Upper lobe of right lung (tissue), 1 donor: ENCODE measurements at regions of chr10 and their contacts with region 1.

Region 1: DNA sequence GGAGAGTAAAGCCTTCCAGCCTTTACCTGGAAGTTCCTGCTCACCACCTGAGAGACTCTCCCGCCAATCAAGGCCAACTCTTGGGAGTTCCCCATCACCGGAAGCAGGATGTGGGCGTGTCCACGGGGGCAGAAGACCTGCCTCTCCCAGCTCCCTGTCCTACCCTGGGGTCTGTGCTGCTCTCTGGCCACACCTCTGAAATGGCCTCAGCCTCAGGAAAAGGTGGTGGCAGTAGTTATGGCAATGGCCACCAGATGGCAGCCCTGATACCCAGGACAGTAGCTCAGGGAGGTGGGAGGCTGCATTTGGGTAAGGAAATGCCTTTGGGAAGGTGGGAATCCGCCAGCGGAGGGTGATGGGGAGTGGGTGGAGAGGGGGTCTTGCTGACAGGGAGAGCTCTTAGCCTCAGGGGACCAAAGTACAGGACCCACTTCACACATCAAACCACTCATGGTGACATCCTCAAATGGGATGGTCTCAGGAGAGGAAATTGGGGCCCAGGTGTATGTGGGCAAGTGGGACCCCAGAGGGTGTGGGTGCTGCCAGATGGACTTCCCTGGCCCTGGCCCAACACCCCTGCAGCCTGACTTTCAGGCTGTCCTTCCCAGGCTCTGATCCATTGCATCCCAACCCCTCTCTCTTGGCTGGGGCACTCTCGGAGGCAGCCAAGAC is 33.9 kb downstream of the KAZALD1 start:
- DNase-seq: peak; percentile 80
- ATAC-seq: peak; percentile 86
- H3K4me3 ChIP-seq: no peak overlapping the region
- H3K27ac ChIP-seq: no peak overlapping the region
- H3K4me1 ChIP-seq: no peaks in the 10 kb centered on the region
- H3K27me3 ChIP-seq: peaks cover 32% of the 10 kb centered on the region
- CTCF ChIP-seq: peak; percentile 79

Region 2: DNA sequence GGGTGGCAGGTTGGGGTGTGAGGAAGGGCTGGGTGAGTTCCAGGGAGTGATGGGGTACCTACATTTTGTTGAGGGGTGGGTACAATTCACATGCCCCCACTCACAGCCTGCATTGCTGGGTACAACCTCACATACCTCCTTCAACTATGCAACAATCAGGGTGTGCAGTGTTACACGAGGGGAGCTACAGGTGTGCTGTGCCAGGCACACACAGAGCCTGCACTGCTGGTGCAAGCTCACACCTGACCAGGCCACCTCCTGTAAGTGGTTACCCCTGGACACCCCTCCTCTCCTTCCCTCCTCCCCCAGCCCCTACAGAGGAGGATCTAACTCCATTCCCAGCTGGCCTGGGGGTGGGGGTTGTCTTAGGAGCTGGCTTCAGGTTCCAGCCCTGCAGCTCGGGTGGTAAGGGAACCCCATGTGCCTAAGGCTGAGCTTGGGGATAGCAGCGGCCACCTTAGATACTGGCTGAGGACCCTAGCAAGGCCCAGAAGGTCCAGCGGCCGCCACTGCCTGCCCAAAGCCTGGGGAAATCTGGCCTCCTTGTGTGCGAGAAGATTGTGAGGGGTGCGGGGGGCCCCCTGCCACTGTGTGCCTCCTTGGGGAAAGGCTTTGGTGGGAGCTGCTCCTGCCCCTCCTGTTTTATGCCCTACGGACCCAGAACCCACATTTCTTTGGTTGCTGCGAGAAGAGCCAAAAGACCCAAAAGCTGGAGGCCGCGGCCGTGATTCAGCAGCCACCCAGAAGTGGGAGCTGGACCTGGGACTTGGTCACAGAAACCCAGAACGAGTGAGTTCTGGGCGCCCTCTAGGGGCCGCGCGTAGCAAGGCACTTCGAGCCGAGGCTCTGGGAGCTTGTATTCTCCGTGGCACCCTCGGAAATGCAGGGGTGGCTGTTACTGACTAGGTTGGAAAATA is 46.2 kb after region 1 on chr10:
- intact Hi-C with region 1: loop called (anchors 10 kb)
- DNase-seq: peak; percentile 91
- ATAC-seq: peak; percentile 92
- H3K4me3 ChIP-seq: no peak overlapping the region
- H3K27ac ChIP-seq: no peak overlapping the region
- H3K4me1 ChIP-seq: peaks cover 11% of the 10 kb centered on the region
- H3K27me3 ChIP-seq: peaks cover 99% of the 10 kb centered on the region
- CTCF ChIP-seq: peak; percentile 98